ENCODE measurements at regions of chr14 and their contacts with region 1.

Region 1: DNA sequence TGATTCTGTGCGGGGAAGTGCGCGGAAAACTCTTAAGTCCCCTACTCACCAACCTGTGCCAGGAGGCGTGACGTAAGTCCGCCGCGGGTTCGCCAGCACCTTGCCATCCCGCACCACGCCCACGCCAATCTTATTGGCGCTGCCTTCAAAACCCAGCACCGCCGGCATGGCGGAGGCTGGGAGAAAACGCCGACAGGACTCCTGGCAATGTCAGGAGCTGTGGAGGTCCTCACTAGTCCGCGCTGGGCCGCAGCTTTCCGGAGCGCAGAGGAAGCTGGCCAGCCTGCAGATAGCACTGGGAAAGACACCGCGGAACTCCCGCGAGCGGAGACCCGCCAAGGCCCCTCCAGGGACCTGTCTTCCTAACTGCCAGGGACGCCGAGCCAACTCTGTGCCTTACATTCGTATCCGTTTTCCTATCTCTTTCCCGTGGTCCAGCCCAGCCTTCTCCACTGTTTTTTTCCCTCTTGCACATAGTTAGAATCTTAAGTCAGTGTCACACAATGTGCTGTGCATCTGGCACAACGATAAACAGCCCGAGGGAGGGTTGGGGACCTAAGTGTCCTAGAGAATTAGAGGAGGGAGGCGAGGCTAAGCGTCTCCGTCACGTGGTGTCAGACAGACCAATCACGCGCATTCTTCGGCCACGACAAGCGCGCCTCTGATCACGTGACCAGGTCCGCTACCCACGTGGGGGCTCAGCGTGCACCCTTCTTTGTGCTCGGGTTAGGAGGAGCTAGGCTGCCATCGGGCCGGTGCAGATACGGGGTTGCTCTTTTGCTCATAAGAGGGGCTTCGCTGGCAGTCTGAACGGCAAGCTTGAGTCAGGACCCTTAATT is at the starts of genes APEX1 and OSGEP:
- DNase-seq: peak; percentile 98 to 99 (median 99)
- H3K4me3 ChIP-seq: peak within 1 kb of the TSS; percentile 63 to 99 (median 88)
- H3K27ac ChIP-seq: peak within 1 kb of the TSS; percentile 53 to 99 (median 93)
- H3K27me3 ChIP-seq: no peaks in the 10 kb centered on the region
- CTCF ChIP-seq: peak in 14 of 56 donors; percentile 0 to 44 (median 16)
- total RNA-seq, gene APEX1: 36.8 to 106 (median 72.0) TPM
- total RNA-seq, gene OSGEP: 29.3 to 87.4 (median 51.0) TPM

Region 2: GRCh38 chr14:20413045-20413799 is 41.5 kb before region 1 on chr14 and contains the start of gene TEP1:
- intact Hi-C with region 1: loop called (anchors 1 to 5 kb)
- DNase-seq: peak; percentile 63 to 86 (median 78)
- H3K4me3 ChIP-seq: peak within 1 kb of the TSS; percentile 53 to 96 (median 84)
- H3K27ac ChIP-seq: peak within 1 kb of the TSS; percentile 44 to 96 (median 88)
- H3K27me3 ChIP-seq: no peaks in the 10 kb centered on the region
- CTCF ChIP-seq: peak in 9 of 56 donors; percentile 12 to 43 (median 32)
- total RNA-seq, gene TEP1: 7.8 to 36.4 (median 17.7) TPM

Region 3: GRCh38 chr14:20434701-20435581 is 19.8 kb before region 1 on chr14:
- intact Hi-C with region 1: loop called in 1 of 2 experiments (anchors 2 kb)
- DNase-seq: peak; percentile 43 to 92 (median 69)
- H3K4me3 ChIP-seq: peak overlapping the region; percentile 4 to 69 (median 43)
- H3K27ac ChIP-seq: peak overlapping the region in 57 of 59 donors; percentile 3 to 88 (median 72)
- H3K27me3 ChIP-seq: peaks cover 0 to 5% (median 0%) of the 10 kb centered on the region in 45 donors
- CTCF ChIP-seq: peak in 3 of 56 donors; percentile 8 to 24 (median 16)

Region 4: DNA sequence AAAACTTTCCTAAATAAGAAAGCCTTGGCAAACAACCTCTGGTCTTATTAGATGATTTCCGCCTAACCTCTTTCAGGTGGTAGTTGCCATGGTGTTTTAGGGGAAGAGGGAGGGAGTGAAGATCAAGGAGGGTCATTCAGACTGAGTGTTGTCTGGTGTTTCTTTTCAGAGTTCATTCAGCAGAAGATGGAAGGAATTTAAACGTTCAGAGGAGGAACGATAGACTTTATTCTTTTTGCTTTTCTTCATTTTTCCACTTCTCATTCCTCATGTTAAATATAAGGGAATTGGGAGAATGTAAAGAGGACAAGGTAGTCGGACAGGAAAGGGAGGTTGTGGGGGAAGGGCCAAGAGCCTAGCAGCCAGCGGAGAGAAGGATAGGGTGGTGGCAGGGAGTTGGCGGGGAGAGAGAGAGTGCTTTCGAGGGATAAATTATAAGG is 1088.8 kb after region 1 on chr14:
- intact Hi-C with region 1: no loop called
- DNase-seq: no peak
- H3K4me3 ChIP-seq: no peak overlapping the region
- H3K27ac ChIP-seq: no peak overlapping the region
- H3K27me3 ChIP-seq: peaks cover 0 to 26% (median 1%) of the 10 kb centered on the region in 45 donors
- CTCF ChIP-seq: no peak

Measured in dorsolateral prefrontal cortex (tissue), 120 donors.